ENCODE measurements at regions of chr15 and their contacts with region 1.

Region 1: GRCh38 chr15:74906446-74907162 is at the start of gene FAM219B:
- DNase-seq: peak; percentile 65 to 83 (median 83)
- H3K4me3 ChIP-seq: peak within 1 kb of the TSS; percentile 83 to 92 (median 89)
- H3K27ac ChIP-seq: peak within 1 kb of the TSS; percentile 72 to 88
- H3K4me1 ChIP-seq: peaks cover 16 to 50% (median 40%) of the 10 kb centered on the region in 4 experiments
- H3K27me3 ChIP-seq: no peaks in the 10 kb centered on the region

Region 2: GRCh38 chr15:74842581-74843444 is 63.8 kb before region 1 on chr15 and contains the start of gene ULK3:
- CTCF ChIA-PET with region 1: interaction called, 130 read pairs
- POLR2A ChIA-PET with region 1: interaction called, 8 read pairs
- DNase-seq: peak; percentile 93 to 97 (median 96)
- H3K4me3 ChIP-seq: peak within 1 kb of the TSS; percentile 76 to 95 (median 81)
- H3K27ac ChIP-seq: peak within 1 kb of the TSS; percentile 46 to 80
- H3K4me1 ChIP-seq: peaks cover 0 to 47% (median 40%) of the 10 kb centered on the region in 4 experiments
- H3K27me3 ChIP-seq: no peaks in the 10 kb centered on the region

Region 3: DNA sequence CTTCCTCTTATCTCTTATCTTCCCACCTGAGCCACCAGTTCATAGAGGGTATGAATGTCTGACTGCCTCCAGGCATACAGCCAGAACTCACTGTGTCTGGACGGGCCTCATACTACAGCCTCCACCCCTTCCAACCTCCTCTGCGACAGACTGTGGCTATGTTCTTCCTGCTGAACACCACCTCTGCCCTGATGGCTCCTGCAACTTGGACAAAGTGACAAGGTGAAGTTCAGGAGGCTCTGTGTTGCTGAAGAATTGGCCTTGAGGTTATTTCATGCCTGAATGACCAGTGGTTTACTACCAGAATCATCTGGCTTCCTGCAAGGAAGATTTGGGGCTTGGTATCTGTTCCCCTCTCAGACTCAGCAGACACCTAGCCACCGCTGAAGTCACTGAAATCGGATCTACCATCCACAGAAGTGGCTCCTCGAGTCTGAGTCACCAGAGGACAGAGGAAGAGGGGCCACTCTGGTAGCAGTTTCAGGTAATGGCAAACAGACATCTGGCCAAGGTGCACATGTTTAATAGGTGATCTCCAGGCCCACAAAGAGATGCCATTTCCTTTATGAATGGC is 49.4 kb before region 1 on chr15:
- CTCF ChIA-PET with region 1: interaction called, 58 read pairs
- POLR2A ChIA-PET with region 1: no interaction called
- DNase-seq: peak in 1 of 3 donors; percentile 43
- H3K4me3 ChIP-seq: no peak overlapping the region
- H3K27ac ChIP-seq: peak overlapping the region in 1 of 2 experiments; percentile 2
- H3K4me1 ChIP-seq: peaks cover 2 to 38% (median 36%) of the 10 kb centered on the region in 4 experiments
- H3K27me3 ChIP-seq: no peaks in the 10 kb centered on the region

Region 4: GRCh38 chr15:74873036-74873755 is 33.4 kb before region 1 on chr15 and contains the start of gene SCAMP2:
- CTCF ChIA-PET with region 1: interaction called, 67 read pairs
- POLR2A ChIA-PET with region 1: interaction called, 23 read pairs
- DNase-seq: peak; percentile 95 to 98 (median 97)
- H3K4me3 ChIP-seq: peak within 1 kb of the TSS; percentile 73 to 97 (median 87)
- H3K27ac ChIP-seq: peak within 1 kb of the TSS; percentile 95 to 98
- H3K4me1 ChIP-seq: peaks cover 23 to 54% (median 51%) of the 10 kb centered on the region in 4 experiments
- H3K27me3 ChIP-seq: no peaks in the 10 kb centered on the region

Region 5: DNA sequence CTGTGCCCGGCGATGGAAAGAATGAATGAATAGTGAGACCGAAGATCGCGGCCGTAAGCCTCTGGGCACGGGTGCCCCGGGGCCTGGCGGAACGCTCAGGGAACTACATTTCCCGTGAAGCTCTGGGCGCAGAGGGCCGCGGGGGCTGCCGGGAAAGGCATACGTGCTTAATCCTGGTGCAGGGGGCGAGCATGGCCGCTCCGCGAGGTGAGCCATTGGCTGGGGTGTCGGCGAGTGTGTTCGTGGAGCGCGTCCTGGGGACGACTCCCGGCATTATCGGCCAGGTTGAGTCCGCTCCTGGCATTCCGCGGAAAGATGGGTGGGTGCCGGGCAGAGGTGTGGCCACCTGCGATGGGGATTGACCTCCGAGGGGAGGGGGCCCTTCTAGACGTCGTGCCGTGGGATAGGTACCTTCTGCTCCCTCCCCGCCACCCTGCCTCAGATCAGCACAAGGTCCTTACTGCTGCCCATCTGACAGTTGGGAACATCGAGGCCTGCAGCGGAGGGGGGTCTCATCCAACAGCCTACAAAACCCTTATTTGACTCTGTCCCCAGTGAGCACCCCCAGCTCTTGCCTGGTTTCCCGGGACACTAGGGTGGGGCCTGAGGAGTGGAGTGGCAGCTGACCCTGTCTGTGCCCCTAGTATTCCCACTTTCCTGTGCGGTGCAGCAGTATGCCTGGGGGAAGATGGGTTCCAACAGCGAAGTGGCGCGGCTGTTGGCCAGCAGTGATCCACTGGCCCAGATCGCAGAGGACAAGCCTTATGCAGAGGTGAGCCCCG is 16.5 kb before region 1 on chr15 and contains the start of gene MPI:
- CTCF ChIA-PET with region 1: interaction called, 35 read pairs
- POLR2A ChIA-PET with region 1: interaction called, 6 read pairs
- DNase-seq: peak; percentile 77 to 87 (median 82)
- H3K4me3 ChIP-seq: peak within 1 kb of the TSS; percentile 49 to 94 (median 88)
- H3K27ac ChIP-seq: peak within 1 kb of the TSS; percentile 43 to 86
- H3K4me1 ChIP-seq: peaks cover 0 to 35% (median 22%) of the 10 kb centered on the region in 4 experiments
- H3K27me3 ChIP-seq: no peaks in the 10 kb centered on the region

Region 6: GRCh38 chr15:74950078-74951000 is 43.7 kb after region 1 on chr15:
- CTCF ChIA-PET with region 1: interaction called, 14 read pairs
- POLR2A ChIA-PET with region 1: no interaction called
- DNase-seq: peak; percentile 76 to 89 (median 78)
- H3K4me3 ChIP-seq: no peak overlapping the region
- H3K27ac ChIP-seq: no peak overlapping the region
- H3K4me1 ChIP-seq: peaks cover 0 to 19% (median 11%) of the 10 kb centered on the region in 4 experiments
- H3K27me3 ChIP-seq: no peaks in the 10 kb centered on the region

Measured in common myeloid progenitor, CD34-positive (primary cell).